Right ventricle myocardium superior (tissue), 1 donor: ENCODE measurements at regions of chr5 and their contacts with region 1.

Region 1: GRCh38 chr5:163564321-163564938 is 59.0 kb downstream of the MAT2B start:
- DNase-seq: no peak
- ATAC-seq: peak; percentile 77

Region 2: DNA sequence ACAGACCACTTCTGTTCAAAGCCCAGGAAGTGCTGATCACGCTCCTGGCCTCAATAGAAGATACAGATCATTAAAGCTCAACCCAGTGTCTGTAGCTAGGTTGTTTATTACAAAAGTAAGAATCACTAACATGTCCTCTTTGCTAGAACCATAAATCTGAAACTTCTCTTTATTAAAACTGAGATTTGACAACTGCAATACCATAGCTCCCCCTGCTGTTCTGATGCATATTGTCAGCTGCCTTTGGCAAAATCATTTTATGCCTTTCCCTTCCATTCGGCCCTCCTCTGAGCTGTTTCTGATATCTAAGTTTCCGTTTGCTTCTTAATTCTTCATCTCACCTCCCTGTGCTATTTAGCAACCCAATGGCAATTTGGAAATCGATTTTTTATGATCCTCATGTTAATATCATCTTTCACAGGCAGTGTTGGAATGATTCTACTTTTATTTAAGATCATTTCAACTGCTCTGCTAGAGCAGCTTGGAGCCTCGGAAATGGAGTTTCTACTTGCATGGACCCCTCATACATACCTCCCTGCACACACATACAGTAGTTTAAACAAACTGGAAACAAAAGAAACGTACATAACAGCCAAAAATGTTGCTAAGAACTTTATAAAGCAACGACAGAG is 939.8 kb after region 1 on chr5:
- intact Hi-C with region 1: loop called (anchors 5 kb)
- DNase-seq: no peak
- ATAC-seq: no peak

Region 3: GRCh38 chr5:165209086-165209727 is 1644.8 kb after region 1 on chr5:
- intact Hi-C with region 1: loop called (anchors 10 kb)
- DNase-seq: no peak
- ATAC-seq: no peak